Activated naive CD4-positive, alpha-beta T cell treated with anti-CD3 and anti-CD28 coated beads for 36 hours (primary cell): ENCODE measurements at regions of chr2 and their contacts with region 1.

Region 1: GRCh38 chr2:190880378-190881073 is at the start of gene GLS:
- DNase-seq: peak; percentile 98
- H3K4me3 Mint-ChIP-seq: peak within 1 kb of the TSS; percentile 96
- H3K27ac Mint-ChIP-seq: peak within 1 kb of the TSS; percentile 99
- H3K4me1 Mint-ChIP-seq: peaks cover 42% of the 10 kb centered on the region
- H3K27me3 Mint-ChIP-seq: no peaks in the 10 kb centered on the region
- total RNA-seq, gene GLS: 248 to 255 TPM

Region 2: DNA sequence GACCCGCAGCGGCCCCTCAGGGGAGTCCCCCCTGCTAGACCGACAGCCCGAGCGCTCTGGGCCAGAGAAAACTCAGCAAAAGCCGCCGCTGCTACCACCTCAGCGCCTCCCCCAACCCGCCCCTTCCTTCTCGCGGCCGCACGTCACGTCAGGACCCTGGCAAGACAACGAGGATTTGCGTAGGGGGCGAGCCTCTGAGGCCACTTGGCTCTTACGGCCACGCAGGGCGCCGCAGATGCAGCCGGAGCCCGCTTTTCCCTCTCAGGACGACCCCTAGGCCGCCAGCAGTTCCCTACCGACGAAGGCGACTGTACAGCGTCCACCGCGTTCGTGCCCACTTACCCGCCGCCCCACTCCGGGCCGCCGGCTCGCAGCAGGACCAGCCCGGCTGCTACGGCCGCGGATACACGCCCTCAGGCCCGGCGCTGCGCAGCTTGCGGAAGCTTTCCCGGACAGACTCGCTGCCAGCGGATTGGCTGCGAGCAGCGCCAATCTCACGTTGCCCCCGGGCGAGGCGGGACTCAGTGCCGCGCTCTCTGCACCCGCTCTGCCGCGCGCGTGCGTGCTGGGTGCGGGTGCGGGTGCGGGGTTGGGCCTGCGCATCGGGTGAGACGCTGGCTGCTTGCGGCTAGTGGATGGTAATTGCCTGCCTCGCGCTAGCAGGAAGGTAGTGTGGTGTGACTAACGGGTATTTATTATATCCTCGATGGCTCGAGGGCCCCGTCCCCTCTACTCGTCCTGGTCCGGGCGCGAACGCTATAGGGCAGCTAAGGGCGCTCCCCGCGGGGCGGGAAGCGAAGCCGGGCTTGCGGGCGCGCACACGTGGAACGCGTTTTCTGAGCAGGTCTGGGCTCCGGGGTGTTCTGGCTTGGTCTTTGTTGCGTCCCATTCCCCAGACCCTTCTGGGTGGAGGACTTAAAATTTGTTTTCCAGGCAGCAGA is 1096.3 kb before region 1 on chr2 and contains the starts of genes ORMDL1 and PMS1:
- CTCF ChIA-PET with region 1: no interaction called
- intact Hi-C with region 1: loop called (anchors 1 kb)
- DNase-seq: peak; percentile 93
- H3K4me3 Mint-ChIP-seq: peak within 1 kb of the TSS; percentile 93
- H3K27ac Mint-ChIP-seq: peak within 1 kb of the TSS; percentile 92
- H3K4me1 Mint-ChIP-seq: peaks cover 51% of the 10 kb centered on the region
- H3K27me3 Mint-ChIP-seq: no peaks in the 10 kb centered on the region
- total RNA-seq, gene ORMDL1: 34.6 to 37.3 TPM
- total RNA-seq, gene PMS1: 29.7 to 32.5 TPM

Region 3: GRCh38 chr2:190648289-190649034 is 232.1 kb before region 1 on chr2:
- CTCF ChIA-PET with region 1: no interaction called
- intact Hi-C with region 1: loop called (anchors 1 kb)
- DNase-seq: peak; percentile 81
- H3K4me3 Mint-ChIP-seq: peak overlapping the region; percentile 68
- H3K27ac Mint-ChIP-seq: peak overlapping the region; percentile 76
- H3K4me1 Mint-ChIP-seq: peaks cover 43% of the 10 kb centered on the region
- H3K27me3 Mint-ChIP-seq: no peaks in the 10 kb centered on the region

Region 4: GRCh38 chr2:190759749-190760213 is 120.7 kb before region 1 on chr2:
- CTCF ChIA-PET with region 1: no interaction called
- intact Hi-C with region 1: no loop called
- DNase-seq: no peak
- H3K4me3 Mint-ChIP-seq: no peak overlapping the region
- H3K27ac Mint-ChIP-seq: no peak overlapping the region
- H3K4me1 Mint-ChIP-seq: peaks cover 38% of the 10 kb centered on the region
- H3K27me3 Mint-ChIP-seq: no peaks in the 10 kb centered on the region

Region 5: DNA sequence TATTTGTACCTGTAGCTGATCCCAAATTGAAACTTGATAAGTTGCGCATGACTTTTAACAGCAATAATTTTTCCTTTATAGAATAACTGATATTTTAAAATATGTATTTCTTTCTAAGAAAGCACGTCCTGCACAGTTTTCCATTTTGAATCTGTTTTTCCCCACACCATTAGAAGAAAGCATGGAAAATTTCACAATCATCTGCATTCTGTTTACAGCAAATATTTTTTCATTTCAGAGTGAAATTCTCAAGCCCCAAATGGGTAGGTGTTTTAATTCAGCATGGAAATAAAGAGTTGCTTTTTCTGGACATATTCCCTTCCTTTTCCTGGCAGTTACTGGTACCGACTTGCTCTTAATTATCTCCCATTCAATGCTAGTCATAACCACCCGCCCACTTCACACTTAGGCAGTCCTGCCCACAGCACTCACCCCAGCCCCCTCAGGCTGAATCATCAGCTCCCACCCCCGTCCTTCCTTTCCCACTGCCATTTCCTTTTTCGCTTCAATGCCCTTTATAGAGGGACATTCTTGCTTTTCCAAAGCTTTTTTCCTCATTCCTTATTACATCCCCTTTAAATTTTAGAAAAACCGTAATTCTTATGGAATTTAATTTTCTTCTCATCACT is 89.1 kb before region 1 on chr2:
- CTCF ChIA-PET with region 1: no interaction called
- intact Hi-C with region 1: loop called (anchors 2 kb)
- DNase-seq: peak; percentile 67
- H3K4me3 Mint-ChIP-seq: no peak overlapping the region
- H3K27ac Mint-ChIP-seq: peak overlapping the region; percentile 83
- H3K4me1 Mint-ChIP-seq: peaks cover 55% of the 10 kb centered on the region
- H3K27me3 Mint-ChIP-seq: no peaks in the 10 kb centered on the region

Region 6: GRCh38 chr2:190904640-190905261 is 24.2 kb after region 1 on chr2:
- CTCF ChIA-PET with region 1: no interaction called
- intact Hi-C with region 1: loop called (anchors 1 kb)
- DNase-seq: no peak
- H3K4me3 Mint-ChIP-seq: no peak overlapping the region
- H3K27ac Mint-ChIP-seq: no peak overlapping the region
- H3K4me1 Mint-ChIP-seq: peaks cover 34% of the 10 kb centered on the region
- H3K27me3 Mint-ChIP-seq: no peaks in the 10 kb centered on the region

Region 7: DNA sequence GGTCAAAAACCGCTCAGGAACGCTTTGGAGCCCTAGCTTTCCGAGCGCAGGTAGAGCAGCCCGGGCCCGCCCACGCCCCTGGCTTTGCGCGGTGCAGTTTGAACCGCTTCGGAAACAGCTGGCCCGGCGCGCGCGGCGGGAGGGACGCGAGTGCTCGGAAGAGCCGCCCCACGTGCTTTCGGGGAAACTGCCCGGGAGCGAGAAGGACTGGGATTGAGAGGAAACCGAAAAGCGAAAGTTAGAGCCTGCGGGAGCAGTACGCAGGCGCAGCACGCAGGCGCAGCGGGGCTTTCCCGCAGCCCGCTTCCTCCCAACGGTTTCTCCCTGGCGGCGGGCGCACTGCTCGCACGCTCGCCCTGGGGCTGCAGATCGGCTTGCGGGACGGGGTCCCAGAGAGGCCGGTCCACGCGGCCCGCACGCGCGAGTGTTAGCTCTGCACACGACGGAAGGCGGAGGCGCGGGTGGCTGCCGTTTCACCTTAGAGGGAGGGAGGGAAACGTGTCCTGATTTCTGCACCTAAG is 139.8 kb after region 1 on chr2:
- CTCF ChIA-PET with region 1: no interaction called
- intact Hi-C with region 1: loop called (anchors 1 kb)
- DNase-seq: peak; percentile 93
- H3K4me3 Mint-ChIP-seq: no peak overlapping the region
- H3K27ac Mint-ChIP-seq: no peak overlapping the region
- H3K4me1 Mint-ChIP-seq: peaks cover 36% of the 10 kb centered on the region
- H3K27me3 Mint-ChIP-seq: no peaks in the 10 kb centered on the region

Region 8: DNA sequence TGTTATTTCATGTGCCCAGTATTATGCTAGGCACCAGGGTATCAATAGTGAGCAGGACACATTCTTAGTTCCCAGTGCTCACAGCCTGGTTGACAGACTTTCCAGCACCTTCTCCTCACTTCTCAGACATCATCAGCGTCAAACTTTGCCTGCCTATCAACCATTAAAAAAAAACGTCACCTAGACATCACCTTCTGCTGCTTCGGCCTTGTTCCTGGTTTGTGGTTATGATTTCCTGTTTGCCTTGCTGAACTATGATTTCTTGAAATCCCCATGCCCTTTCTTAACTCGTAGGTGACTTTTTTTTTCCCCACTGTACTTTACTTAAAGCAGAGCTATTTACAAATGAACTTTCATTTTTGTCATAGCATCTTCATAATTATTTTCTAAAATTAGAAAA is 737.0 kb after region 1 on chr2:
- CTCF ChIA-PET with region 1: no interaction called
- intact Hi-C with region 1: loop called (anchors 5 kb)
- DNase-seq: peak; percentile 79
- H3K4me3 Mint-ChIP-seq: no peak overlapping the region
- H3K27ac Mint-ChIP-seq: peak overlapping the region; percentile 97
- H3K4me1 Mint-ChIP-seq: peaks cover 68% of the 10 kb centered on the region
- H3K27me3 Mint-ChIP-seq: no peaks in the 10 kb centered on the region